B cell (primary cell): ENCODE measurements at regions of chr1 and their contacts with region 1.

Region 1: GRCh38 chr1:200802865-200803512 is 64.3 kb downstream of the CAMSAP2 start:
- DNase-seq: peak; percentile 81
- ATAC-seq: peak; percentile 88
- H3K4me3 ChIP-seq: no peak overlapping the region
- H3K4me3 Mint-ChIP-seq: no peak overlapping the region
- H3K27ac ChIP-seq: no peak overlapping the region
- H3K27ac Mint-ChIP-seq: no peak overlapping the region
- H3K4me1 ChIP-seq: no peaks in the 10 kb centered on the region
- H3K4me1 Mint-ChIP-seq: no peaks in the 10 kb centered on the region
- H3K27me3 ChIP-seq: peaks cover 0 to 2% (median 0%) of the 10 kb centered on the region in 4 experiments
- H3K27me3 Mint-ChIP-seq: peaks cover 3% of the 10 kb centered on the region
- CTCF ChIP-seq: peak; percentile 98

Region 2: DNA sequence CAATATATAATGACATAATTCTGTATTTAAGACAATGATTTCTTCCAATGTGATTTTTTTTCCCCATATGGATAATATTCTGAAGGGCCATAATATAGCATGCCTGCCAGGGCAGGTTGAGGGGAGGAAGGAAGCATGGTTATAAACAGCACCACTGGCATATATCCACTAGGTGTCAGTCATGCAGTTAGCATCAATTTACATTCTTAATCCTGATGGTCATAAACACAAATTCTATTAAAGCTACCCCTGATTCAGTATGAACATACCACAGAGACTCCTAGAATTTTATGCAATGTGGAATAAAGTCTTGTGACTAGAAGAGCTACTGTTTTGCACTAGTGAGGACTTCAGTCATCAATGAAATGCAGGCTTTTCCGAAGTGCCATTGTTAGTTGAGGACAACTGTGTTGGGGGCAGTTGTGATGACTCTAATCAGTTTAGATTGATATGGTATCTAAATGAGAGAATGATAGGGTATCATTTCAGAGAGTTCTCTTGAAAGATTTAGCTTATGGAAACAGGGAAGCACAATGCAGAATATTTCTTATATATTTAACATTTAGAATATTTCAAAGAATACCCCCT is 1118.2 kb before region 1 on chr1:
- CTCF ChIA-PET with region 1: no interaction called
- POLR2A ChIA-PET with region 1: no interaction called
- intact Hi-C with region 1: loop called (anchors 10 kb)
- DNase-seq: peak; percentile 69
- ATAC-seq: peak; percentile 73
- H3K4me3 ChIP-seq: no peak overlapping the region
- H3K4me3 Mint-ChIP-seq: no peak overlapping the region
- H3K27ac ChIP-seq: no peak overlapping the region
- H3K27ac Mint-ChIP-seq: no peak overlapping the region
- H3K4me1 ChIP-seq: no peaks in the 10 kb centered on the region
- H3K4me1 Mint-ChIP-seq: no peaks in the 10 kb centered on the region
- H3K27me3 ChIP-seq: peaks cover 0 to 7% (median 6%) of the 10 kb centered on the region in 4 experiments
- H3K27me3 Mint-ChIP-seq: peaks cover 24% of the 10 kb centered on the region
- CTCF ChIP-seq: peak; percentile 92

Region 3: DNA sequence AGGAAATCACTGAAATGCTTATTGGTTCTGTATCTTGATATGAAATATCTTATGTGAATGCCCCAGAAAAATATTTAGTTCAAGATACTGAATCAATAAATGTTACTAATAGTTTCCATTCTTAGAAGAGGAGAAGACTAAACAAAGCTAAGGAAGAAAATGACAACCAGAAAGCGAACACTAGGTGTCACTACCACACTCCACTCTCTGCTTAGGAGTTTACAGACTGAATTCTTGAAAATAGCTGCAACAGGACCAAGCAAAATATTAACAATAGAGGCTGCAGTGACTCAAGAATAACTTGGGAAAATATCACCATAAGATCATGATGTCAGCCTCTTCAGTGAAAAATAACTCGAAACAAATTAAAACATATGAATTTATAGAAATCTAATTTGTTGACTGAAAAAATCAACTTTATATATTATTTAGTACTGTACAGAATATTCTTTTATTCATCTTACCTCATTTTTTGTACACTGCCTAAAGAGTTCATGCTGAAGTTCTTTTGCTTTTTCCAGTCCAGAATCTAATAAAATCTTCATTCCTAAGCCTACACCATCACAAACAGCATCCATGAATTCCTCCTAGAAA is 244.0 kb before region 1 on chr1:
- CTCF ChIA-PET with region 1: interaction called, 19 read pairs
- POLR2A ChIA-PET with region 1: no interaction called
- intact Hi-C with region 1: no loop called
- DNase-seq: peak; percentile 51
- ATAC-seq: no peak
- H3K4me3 ChIP-seq: no peak overlapping the region
- H3K4me3 Mint-ChIP-seq: no peak overlapping the region
- H3K27ac ChIP-seq: no peak overlapping the region
- H3K27ac Mint-ChIP-seq: no peak overlapping the region
- H3K4me1 ChIP-seq: no peaks in the 10 kb centered on the region
- H3K4me1 Mint-ChIP-seq: peaks cover 1% of the 10 kb centered on the region
- H3K27me3 ChIP-seq: no peaks in the 10 kb centered on the region
- H3K27me3 Mint-ChIP-seq: no peaks in the 10 kb centered on the region
- CTCF ChIP-seq: peak; percentile 75

Region 4: DNA sequence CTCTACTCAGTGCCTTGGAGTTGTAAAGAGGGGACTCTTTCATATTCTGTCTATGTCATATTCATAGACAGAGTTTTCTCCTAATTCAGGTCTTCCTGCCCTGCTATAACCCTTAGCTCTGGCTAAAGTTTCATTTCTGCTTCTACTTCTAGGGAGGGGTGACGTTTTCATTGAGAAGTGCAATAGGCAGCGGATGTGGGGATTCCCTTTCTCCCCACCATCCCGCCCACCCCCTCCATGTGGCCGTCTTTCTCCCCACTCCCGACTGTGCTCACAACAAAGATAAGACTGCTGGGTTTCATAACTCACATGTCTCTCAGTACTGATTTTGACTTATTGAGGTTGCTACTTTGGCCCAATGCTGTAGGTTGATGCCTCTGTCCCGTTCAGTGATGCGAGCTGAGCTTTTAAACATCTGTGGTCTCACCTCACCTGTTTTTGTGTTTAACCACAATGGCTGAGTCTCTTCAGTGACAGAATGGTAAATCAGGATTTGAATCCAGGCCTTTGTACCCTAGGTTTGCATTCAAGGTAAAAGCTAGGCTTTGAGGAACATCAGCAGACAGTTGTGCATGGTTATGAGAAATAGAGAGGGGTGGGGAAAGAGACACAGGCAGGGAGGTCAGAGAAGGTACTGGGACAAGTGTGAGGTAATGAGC is 174.6 kb before region 1 on chr1:
- CTCF ChIA-PET with region 1: interaction called, 168 read pairs
- POLR2A ChIA-PET with region 1: no interaction called
- intact Hi-C with region 1: no loop called
- DNase-seq: peak; percentile 87
- ATAC-seq: peak; percentile 84
- H3K4me3 ChIP-seq: peak overlapping the region in 3 of 5 experiments; percentile 24 to 38 (median 34)
- H3K4me3 Mint-ChIP-seq: peak overlapping the region; percentile 76
- H3K27ac ChIP-seq: peak overlapping the region; percentile 58 to 79
- H3K27ac Mint-ChIP-seq: peak overlapping the region; percentile 46
- H3K4me1 ChIP-seq: peaks cover 24 to 25% of the 10 kb centered on the region in 2 donors
- H3K4me1 Mint-ChIP-seq: peaks cover 21% of the 10 kb centered on the region
- H3K27me3 ChIP-seq: no peaks in the 10 kb centered on the region
- H3K27me3 Mint-ChIP-seq: no peaks in the 10 kb centered on the region
- CTCF ChIP-seq: no peak

Region 5: GRCh38 chr1:200669314-200670241 is 133.4 kb before region 1 on chr1 and contains the start of gene DDX59:
- CTCF ChIA-PET with region 1: interaction called, 7 read pairs
- POLR2A ChIA-PET with region 1: no interaction called
- intact Hi-C with region 1: loop called (anchors 5 kb)
- DNase-seq: peak; percentile 92
- ATAC-seq: peak; percentile 82
- H3K4me3 ChIP-seq: peak within 1 kb of the TSS; percentile 56 to 95 (median 78)
- H3K4me3 Mint-ChIP-seq: peak within 1 kb of the TSS; percentile 99
- H3K27ac ChIP-seq: peak within 1 kb of the TSS; percentile 92 to 98
- H3K27ac Mint-ChIP-seq: peak within 1 kb of the TSS; percentile 99
- H3K4me1 ChIP-seq: peaks cover 8 to 13% of the 10 kb centered on the region in 2 donors
- H3K4me1 Mint-ChIP-seq: peaks cover 42% of the 10 kb centered on the region
- H3K27me3 ChIP-seq: no peaks in the 10 kb centered on the region
- H3K27me3 Mint-ChIP-seq: no peaks in the 10 kb centered on the region
- CTCF ChIP-seq: no peak
- total RNA-seq, gene DDX59: 41.9 and 43.6 TPM in 2 replicates